Mammary epithelial cell (primary cell): ENCODE measurements at regions of chr4 and their contacts with region 1.

Region 1: GRCh38 chr4:38449506-38450174 is 214.4 kb upstream of the KLF3 start:
- DNase-seq: no peak
- H3K4me3 ChIP-seq: no peak overlapping the region
- H3K27ac ChIP-seq: no peak overlapping the region
- H3K4me1 ChIP-seq: no peaks in the 10 kb centered on the region
- H3K27me3 ChIP-seq: no peaks in the 10 kb centered on the region
- CTCF ChIP-seq: no peak

Region 2: GRCh38 chr4:38641811-38642210 is 192.2 kb after region 1 on chr4:
- CTCF ChIA-PET with region 1: no interaction called
- dilution Hi-C with region 1: loop called (anchors 5 kb)
- in situ Hi-C with region 1: no loop called
- intact Hi-C with region 1: no loop called
- DNase-seq: peak; percentile 20
- H3K4me3 ChIP-seq: no peak overlapping the region
- H3K27ac ChIP-seq: no peak overlapping the region
- H3K4me1 ChIP-seq: peaks cover 8% of the 10 kb centered on the region
- H3K27me3 ChIP-seq: no peaks in the 10 kb centered on the region
- CTCF ChIP-seq: no peak